ENCODE measurements at regions of chr5 and their contacts with region 1.

Region 1: DNA sequence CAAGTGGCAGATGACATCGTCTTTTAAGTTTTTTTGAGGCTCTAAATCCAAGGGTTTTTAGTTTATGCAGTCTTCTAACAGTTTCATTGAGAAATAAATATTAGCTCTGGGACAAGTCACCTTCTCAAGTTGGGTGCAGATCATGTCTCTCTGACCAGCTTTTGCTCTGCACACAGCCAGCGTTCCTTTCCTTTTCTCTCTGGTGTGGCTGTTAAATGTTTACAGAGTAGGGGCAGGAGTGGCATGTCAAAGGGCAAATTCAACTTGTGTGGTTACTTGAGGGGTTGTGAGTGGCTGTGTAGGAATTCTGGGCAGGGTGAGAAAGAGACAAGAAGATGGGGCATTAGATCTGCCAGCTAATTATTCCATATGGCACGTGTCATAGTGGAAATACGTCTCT is 187.5 kb upstream of the HMHB1 start:
- H3K4me3 Mint-ChIP-seq: no peak overlapping the region
- H3K27ac Mint-ChIP-seq: no peak overlapping the region
- H3K4me1 Mint-ChIP-seq: peaks cover under 1% of the 10 kb centered on the region
- H3K27me3 Mint-ChIP-seq: no peaks in the 10 kb centered on the region

Region 2: GRCh38 chr5:142079306-142079721 is 1545.2 kb before region 1 on chr5:
- intact Hi-C with region 1: no loop called
- H3K4me3 Mint-ChIP-seq: no peak overlapping the region
- H3K27ac Mint-ChIP-seq: no peak overlapping the region
- H3K4me1 Mint-ChIP-seq: peaks cover 6% of the 10 kb centered on the region
- H3K27me3 Mint-ChIP-seq: peaks cover 12% of the 10 kb centered on the region

Region 3: GRCh38 chr5:142597546-142598341 is 1026.7 kb before region 1 on chr5:
- intact Hi-C with region 1: no loop called
- H3K4me3 Mint-ChIP-seq: no peak overlapping the region
- H3K27ac Mint-ChIP-seq: no peak overlapping the region
- H3K4me1 Mint-ChIP-seq: no peaks in the 10 kb centered on the region
- H3K27me3 Mint-ChIP-seq: peaks cover 20% of the 10 kb centered on the region

Region 4: GRCh38 chr5:143585970-143586369 is 38.5 kb before region 1 on chr5:
- intact Hi-C with region 1: loop called (anchors 5 kb)
- H3K4me3 Mint-ChIP-seq: no peak overlapping the region
- H3K27ac Mint-ChIP-seq: no peak overlapping the region
- H3K4me1 Mint-ChIP-seq: peaks cover 23% of the 10 kb centered on the region
- H3K27me3 Mint-ChIP-seq: peaks cover under 1% of the 10 kb centered on the region

Measured in dendritic cell treated with granulocyte-macrophage colony-stimulating factor and Interleukin-4, amounts not matched to agents 40 ng/mL and 50 ng/mL, for 4 days (primary cell).